ENCODE measurements at regions of chr9 and their contacts with region 1.

Region 1: DNA sequence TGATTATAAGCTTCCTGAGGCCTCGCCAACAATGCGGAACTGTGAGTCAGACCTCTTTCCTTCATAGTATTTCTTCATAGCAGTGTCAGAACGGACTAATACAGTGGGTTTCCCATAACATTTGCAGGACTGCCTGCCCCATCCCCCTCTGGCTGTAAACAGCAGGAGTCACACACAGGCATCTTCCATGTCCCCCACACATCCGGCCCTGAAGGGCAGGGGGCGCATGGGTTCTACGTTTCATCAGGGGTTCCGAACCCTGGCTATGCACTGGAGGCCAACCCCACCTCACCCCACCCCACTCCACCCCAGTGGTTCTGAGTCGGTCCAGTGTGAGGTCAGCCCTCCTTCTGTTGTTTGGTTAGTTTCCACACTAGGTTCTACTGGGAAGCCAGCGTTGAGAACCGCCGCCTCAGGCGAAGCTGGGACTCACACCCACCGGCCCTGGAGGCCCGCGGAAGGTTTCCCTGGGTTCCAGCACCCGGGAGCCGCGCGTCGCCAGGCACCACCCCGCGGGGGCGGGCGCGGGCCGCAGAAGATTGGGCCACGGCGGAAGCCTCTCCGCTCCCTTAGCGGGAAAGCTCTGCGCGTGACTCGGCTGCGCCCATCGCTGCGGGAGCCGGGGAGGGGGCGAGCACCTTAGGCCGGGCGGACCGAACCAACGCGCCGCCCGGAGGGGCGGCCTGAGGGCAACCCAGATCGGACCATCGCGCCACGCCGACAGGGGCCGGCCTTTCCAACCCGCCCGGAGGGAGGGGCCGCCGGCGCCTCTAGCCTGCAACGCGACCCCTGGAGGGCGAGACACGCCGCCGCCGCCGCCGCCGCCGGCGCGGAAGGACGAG is at the start of gene RUSC2:
- DNase-seq: peak; percentile 71 to 85
- ATAC-seq: peak; percentile 88
- total RNA-seq, gene RUSC2: 7.7 to 9.2 TPM

Region 2: DNA sequence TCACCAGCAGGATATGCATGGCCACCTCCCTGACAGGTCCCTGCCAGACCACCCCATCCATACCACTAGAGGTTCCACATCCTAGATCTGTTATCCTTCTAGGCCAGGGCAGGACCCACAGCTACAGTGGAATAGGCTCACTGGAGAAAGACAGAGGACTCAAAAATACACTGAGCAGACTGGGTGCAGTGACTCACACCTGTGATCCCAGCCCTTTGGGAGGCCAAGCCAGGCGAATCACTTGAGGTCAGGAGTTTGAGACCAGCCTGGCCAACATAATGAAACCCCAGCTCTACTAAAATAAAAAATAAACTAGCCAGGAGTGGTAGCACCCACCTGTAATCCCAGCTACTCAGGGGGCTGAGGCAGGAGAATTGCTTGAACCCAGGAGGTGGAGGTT is 59.0 kb after region 1 on chr9:
- intact Hi-C with region 1: loop called (anchors 5 kb)
- DNase-seq: no peak
- ATAC-seq: no peak

Region 3: DNA sequence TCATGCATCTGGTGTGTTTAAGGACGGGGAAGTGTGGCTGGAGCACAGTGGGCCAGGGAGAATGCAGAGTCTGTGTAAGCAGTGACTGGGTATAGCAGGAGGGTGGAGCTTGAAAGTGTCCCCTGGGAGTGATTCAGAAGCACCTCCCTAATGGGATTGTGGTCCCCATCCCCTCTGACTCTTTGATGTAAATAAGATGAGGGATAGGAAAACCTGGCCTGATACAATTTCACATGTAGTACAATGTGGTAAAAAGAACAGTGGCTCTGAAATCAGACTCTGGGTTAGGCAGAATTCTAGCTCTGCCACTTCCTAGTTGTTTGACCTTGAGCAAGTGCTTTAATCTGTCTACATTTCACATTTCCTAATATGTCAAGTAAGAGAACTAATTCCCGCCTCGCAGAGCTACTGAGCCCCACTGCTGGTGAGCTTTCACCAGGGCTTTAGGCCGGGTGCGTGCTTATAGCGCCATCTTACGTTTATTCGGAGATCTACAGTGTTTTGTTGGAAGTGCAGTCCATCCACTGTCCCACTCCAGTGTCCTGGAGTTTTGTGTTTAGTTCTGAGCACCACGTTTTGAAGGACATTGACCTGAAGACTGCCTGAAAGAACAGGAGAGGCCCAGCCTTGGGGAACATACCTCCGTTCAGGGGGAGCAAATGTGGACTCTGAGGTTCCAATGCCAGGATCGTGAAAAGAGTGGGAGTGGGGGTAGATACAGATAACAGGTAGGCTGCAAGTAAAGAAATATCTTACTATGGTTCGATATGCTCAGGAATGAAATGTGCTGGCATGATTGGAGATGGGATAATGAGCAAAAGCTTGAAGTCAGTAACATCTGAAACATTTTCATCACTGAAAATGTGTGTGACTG is 64.4 kb after region 1 on chr9:
- intact Hi-C with region 1: loop called (anchors 5 kb)
- DNase-seq: peak; percentile 34 to 51
- ATAC-seq: peak; percentile 73